Psoas muscle (tissue), 8 donors: ENCODE measurements at regions of chr2 and their contacts with region 1.

Region 1: DNA sequence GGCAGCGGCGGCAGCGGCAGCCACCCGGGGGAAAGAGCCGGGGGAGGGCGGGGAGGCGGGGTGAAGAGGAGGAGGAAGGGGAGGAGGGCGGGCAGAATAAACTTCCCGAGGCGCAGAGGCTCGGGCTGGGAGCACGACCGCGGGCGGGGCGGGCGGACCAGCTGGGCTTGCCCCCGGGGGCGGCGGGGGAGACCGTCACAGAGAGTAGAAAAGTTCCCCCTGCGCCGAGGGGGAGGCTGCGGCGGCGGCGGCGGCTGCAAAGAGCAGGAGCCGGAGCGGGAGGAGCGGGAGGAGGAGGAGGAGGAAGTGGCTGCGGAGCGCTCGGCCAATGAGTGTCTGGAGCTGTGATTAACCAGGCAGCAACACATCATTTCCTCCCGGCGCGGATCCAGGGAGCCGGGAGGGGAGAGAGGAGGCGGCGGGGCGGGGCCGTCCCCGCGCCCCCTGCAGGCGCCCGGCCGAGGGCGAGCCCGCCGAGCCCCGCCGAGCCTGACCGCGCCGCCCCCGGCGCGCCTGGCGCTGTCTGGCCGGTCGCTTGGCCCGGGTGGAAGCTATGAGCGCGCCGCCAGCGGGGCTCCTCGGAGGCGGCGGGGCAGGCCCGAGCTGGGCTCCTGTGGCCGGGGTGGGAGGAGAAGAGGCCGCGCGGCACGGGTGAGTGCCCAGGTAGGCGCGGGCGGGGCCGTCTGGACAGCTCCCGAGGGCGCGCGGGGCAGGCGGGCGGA is at the start of gene ACVR1:
- DNase-seq: peak; percentile 97 to 98
- ATAC-seq: peak; percentile 92 to 96 (median 95)
- H3K4me3 ChIP-seq: peak within 1 kb of the TSS; percentile 88
- H3K27ac ChIP-seq: peak within 1 kb of the TSS; percentile 97
- H3K4me1 ChIP-seq: peaks cover 44% of the 10 kb centered on the region
- H3K27me3 ChIP-seq: no peaks in the 10 kb centered on the region
- CTCF ChIP-seq: peak; percentile 64
- total RNA-seq, gene ACVR1: 23.6 to 28.0 (median 25.4) TPM

Region 2: GRCh38 chr2:157777427-157777826 is 98.8 kb before region 1 on chr2:
- intact Hi-C with region 1: loop called (anchors 2 kb)
- DNase-seq: peak in 1 of 2 donors; percentile 19
- ATAC-seq: peak in 2 of 4 donors; percentile 39 to 49
- H3K4me3 ChIP-seq: no peak overlapping the region
- H3K27ac ChIP-seq: no peak overlapping the region
- H3K4me1 ChIP-seq: peaks cover 27% of the 10 kb centered on the region
- H3K27me3 ChIP-seq: no peaks in the 10 kb centered on the region
- CTCF ChIP-seq: peak; percentile 75

Region 3: GRCh38 chr2:157838442-157839161 is 37.6 kb before region 1 on chr2:
- intact Hi-C with region 1: loop called (anchors 2 to 5 kb)
- DNase-seq: peak; percentile 50 to 72
- ATAC-seq: peak; percentile 88 to 92 (median 89)
- H3K4me3 ChIP-seq: peak overlapping the region; percentile 61
- H3K27ac ChIP-seq: peak overlapping the region; percentile 94
- H3K4me1 ChIP-seq: peaks cover 76% of the 10 kb centered on the region
- H3K27me3 ChIP-seq: no peaks in the 10 kb centered on the region
- CTCF ChIP-seq: no peak

Region 4: DNA sequence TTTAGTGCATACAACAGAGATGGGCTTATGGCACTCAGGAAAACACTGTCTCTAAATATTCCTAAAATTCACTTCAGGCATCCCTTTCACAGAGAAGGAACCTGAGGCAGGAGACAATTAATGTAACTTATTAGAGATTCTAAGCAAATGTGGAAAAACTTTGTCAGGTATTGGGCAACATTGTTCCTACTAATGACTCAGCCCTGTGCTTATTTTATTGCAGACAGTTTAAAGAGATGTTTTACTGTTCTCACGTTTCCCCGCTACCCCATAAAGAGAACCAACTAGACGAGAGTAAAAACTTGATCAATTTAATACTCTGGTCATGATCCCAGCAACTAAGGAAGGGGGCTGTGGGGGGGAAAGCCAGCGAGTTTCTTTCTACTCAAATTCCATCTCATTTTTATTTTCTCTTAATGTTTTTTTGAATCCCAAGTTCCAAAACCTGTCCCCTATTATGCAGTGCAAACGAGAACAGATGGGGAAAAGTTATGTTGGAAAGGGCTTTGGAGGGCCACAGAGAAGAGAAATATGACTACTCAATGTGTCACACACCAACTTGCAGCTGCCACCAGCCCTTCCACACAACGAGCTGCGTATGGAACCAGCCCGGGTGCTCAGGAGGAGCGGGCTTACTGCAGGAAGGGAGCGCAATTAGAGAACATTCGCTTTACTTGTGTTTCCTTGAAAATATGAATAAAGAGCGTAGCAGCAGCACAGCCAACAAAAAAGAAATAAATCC is 18.6 kb after region 1 on chr2:
- intact Hi-C with region 1: loop called in 1 of 2 experiments (anchors 1 kb)
- DNase-seq: peak in 1 of 2 donors; percentile 14
- ATAC-seq: peak; percentile 82 to 91 (median 89)
- H3K4me3 ChIP-seq: peak overlapping the region; percentile 25
- H3K27ac ChIP-seq: peak overlapping the region; percentile 50
- H3K4me1 ChIP-seq: no peaks in the 10 kb centered on the region
- H3K27me3 ChIP-seq: no peaks in the 10 kb centered on the region
- CTCF ChIP-seq: no peak